Heart left ventricle (tissue), 16 donors: ENCODE measurements at regions of chrX and their contacts with region 1.

Region 1: DNA sequence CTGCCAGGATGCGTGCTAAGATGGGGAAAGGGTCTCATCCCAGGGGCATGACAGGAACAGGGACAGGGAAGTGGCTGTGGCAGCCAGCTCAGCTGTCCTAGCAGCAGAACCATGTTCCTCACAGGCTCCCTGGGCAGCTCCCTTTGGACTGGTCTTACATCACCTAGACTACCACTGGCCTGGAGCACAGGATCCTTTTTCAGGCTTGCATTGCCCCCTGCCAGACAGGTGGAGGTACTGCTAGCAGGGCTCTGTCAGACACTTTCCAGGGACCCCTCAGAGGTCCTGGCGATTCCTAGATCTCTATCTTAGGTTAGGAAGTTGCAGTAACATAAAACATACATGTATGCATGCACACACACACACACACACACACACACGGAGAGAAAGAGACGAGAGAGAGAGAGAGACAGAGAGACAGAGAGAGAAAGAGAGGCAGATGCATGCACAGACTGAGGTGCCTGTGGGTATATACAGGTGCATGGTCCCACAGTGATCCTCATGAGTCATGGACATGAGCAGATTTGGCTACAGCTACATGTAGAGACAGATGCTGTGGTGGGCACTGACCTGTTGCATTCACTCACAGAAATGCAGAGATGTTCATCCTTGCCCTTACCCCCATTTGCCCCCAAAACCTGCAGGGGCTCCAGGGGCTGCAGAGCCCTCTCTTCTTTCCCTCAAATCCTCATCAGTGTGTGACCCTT is 63.6 kb downstream of the STARD8 start:
- DNase-seq: peak in 2 of 5 donors; percentile 45 to 57
- ATAC-seq: peak; percentile 64 to 74 (median 70)
- H3K4me3 ChIP-seq: no peak overlapping the region
- H3K27ac ChIP-seq: no peak overlapping the region
- H3K4me1 ChIP-seq: peaks cover 0 to 29% (median 2%) of the 10 kb centered on the region in 12 donors
- H3K27me3 ChIP-seq: no peaks in the 10 kb centered on the region
- CTCF ChIP-seq: peak; percentile 25 to 58 (median 46)
- POLR2A ChIP-seq: no peak

Region 2: DNA sequence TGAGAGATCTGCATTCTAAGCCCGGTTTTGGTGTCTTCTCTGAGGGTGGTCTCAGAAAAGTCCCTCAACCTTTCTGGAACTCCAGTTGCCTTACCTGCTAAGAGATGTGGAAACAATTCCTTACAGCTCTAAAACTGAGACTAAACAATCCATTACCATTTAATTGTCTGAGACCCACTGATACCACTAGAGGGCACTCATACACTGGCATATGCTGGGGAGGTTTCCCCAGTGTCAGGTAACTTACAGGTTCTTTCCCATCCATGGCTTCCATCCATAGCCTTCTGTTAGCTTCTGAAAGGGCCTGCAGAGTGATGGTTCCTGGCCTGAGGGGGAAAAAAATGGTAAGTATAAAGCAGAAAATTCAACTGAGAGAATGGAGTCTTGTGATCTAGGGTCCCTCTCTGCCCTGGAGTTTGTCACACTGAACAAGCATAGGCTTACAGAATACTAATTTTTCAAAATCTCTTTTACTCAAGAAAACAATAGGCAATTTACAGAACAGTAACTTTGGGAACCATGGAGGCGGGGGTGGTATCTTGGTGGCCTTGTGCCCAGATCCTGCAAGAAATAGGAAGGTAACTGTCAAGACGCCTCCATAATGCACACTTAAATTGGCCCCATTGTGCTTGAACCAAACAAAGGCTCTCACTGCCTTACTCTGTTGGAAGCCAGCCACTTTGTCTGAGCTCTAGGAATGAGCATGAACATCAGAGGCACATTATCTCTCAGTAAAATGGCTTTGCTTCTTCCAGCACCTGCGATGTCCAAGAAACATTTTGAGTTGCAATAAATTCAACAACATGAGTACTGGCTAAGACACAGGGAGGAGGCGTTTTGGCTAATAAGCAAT is 513.9 kb before region 1 on chrX:
- intact Hi-C with region 1: loop called in 2 of 10 experiments (anchors 5 to 10 kb)
- DNase-seq: peak in 1 of 5 donors; percentile 7
- ATAC-seq: peak in 3 of 4 donors; percentile 39 to 64 (median 63)
- H3K4me3 ChIP-seq: no peak overlapping the region
- H3K27ac ChIP-seq: no peak overlapping the region
- H3K4me1 ChIP-seq: no peaks in the 10 kb centered on the region
- H3K27me3 ChIP-seq: peaks cover 0 to 7% (median 0%) of the 10 kb centered on the region in 9 donors
- CTCF ChIP-seq: peak; percentile 50 to 70 (median 64)
- POLR2A ChIP-seq: no peak

Region 3: GRCh38 chrX:68511255-68511654 is 199.8 kb before region 1 on chrX:
- intact Hi-C with region 1: loop called in 7 of 10 experiments (anchors 2 to 10 kb)
- DNase-seq: peak in 2 of 5 donors; percentile 13 to 17
- ATAC-seq: peak in 2 of 4 donors; percentile 51 to 56
- H3K4me3 ChIP-seq: no peak overlapping the region
- H3K27ac ChIP-seq: no peak overlapping the region
- H3K4me1 ChIP-seq: peaks cover 0 to 21% (median 0%) of the 10 kb centered on the region in 12 donors
- H3K27me3 ChIP-seq: peaks cover 0 to 4% (median 0%) of the 10 kb centered on the region in 9 donors
- CTCF ChIP-seq: peak; percentile 63 to 93 (median 69)
- POLR2A ChIP-seq: no peak

Region 4: DNA sequence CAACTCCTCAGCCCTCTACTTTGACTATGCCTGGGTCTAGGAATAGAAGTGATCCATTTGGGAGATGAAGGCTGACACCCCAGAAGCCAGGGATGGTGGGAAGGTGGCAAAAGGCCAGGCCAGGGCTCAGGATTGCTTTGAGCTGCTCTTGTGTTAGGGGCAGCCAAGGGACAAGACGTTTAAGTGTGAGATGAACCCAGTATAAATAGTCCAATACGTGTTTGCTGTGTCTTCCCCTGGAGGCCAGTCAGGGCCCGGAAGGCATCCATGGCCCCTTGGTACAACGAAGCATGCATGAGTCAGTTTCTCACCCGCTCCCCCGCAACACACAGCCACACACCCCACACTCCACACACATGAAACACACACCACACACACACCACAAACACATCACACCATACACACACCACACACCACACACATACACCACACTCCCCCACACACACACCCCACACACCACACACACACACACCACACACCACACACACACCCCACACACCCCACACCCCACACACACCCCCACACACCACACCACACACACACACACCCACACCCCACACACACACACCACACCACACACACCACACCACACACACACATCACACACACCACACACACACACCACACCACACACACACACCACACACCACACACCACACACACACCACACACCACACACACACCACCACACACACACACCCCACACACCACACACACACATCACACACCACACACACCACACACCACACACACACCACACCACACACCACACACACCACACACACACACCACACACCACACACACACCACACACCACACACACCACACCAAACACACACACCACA is 58.5 kb before region 1 on chrX:
- intact Hi-C with region 1: loop called in 1 of 10 experiments (anchors 10 kb)
- DNase-seq: no peak
- ATAC-seq: peak in 1 of 4 donors; percentile 14
- H3K4me3 ChIP-seq: no peak overlapping the region
- H3K27ac ChIP-seq: no peak overlapping the region
- H3K4me1 ChIP-seq: peaks cover 0 to 2% (median 0%) of the 10 kb centered on the region in 12 donors
- H3K27me3 ChIP-seq: peaks cover 0 to 16% (median 0%) of the 10 kb centered on the region in 9 donors
- CTCF ChIP-seq: no peak
- POLR2A ChIP-seq: no peak